Common myeloid progenitor, CD34-positive (primary cell): ENCODE measurements at regions of chr10 and their contacts with region 1.

Region 1: DNA sequence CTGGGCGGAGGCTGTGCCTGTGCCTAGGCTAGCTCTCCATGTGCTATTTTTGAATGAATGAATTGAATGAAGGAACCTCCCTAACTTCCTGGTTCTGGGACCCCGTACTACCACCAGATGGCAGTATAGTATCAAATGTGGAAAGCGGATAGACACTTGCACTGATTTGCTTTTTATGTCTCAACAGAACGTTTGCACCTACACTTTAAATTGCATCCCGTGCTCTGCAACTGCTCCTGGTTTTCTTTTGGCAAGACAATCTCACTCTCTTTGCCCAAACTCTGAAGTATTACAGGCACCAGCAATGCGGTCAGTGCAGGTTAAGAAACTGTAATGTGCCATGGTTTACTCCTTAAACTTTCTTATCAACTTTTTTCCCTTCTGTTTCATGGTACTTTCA is 6.5 kb downstream of the FZD8 start:
- DNase-seq: peak; percentile 72 to 85 (median 82)
- H3K4me3 ChIP-seq: no peak overlapping the region
- H3K27ac ChIP-seq: no peak overlapping the region
- H3K4me1 ChIP-seq: peaks cover 3 to 13% (median 10%) of the 10 kb centered on the region in 4 experiments
- H3K27me3 ChIP-seq: peaks cover 11 to 47% (median 15%) of the 10 kb centered on the region in 5 experiments

Region 2: GRCh38 chr10:36779234-36779846 is 1143.8 kb after region 1 on chr10:
- CTCF ChIA-PET with region 1: interaction called, 24 read pairs
- POLR2A ChIA-PET with region 1: no interaction called
- DNase-seq: peak; percentile 22 to 48 (median 42)
- H3K4me3 ChIP-seq: no peak overlapping the region
- H3K27ac ChIP-seq: no peak overlapping the region
- H3K4me1 ChIP-seq: no peaks in the 10 kb centered on the region
- H3K27me3 ChIP-seq: no peaks in the 10 kb centered on the region

Region 3: GRCh38 chr10:36880898-36881297 is 1245.3 kb after region 1 on chr10:
- CTCF ChIA-PET with region 1: interaction called, 31 read pairs
- POLR2A ChIA-PET with region 1: no interaction called
- DNase-seq: peak; percentile 13 to 35 (median 27)
- H3K4me3 ChIP-seq: no peak overlapping the region
- H3K27ac ChIP-seq: no peak overlapping the region
- H3K4me1 ChIP-seq: no peaks in the 10 kb centered on the region
- H3K27me3 ChIP-seq: peaks cover 2 to 14% (median 7%) of the 10 kb centered on the region in 5 experiments